CD4-positive, alpha-beta T cell (primary cell): ENCODE measurements at regions of chr9 and their contacts with region 1.

Region 1: GRCh38 chr9:30329431-30329830 is 2055.0 kb upstream of the ACO1 start:
- DNase-seq: no peak
- ATAC-seq: no peak
- H3K4me3 ChIP-seq: no peak overlapping the region
- H3K4me3 Mint-ChIP-seq: no peak overlapping the region
- H3K27ac ChIP-seq: no peak overlapping the region
- H3K27ac Mint-ChIP-seq: no peak overlapping the region
- H3K4me1 ChIP-seq: no peaks in the 10 kb centered on the region
- H3K4me1 Mint-ChIP-seq: no peaks in the 10 kb centered on the region
- H3K27me3 ChIP-seq: no peaks in the 10 kb centered on the region
- H3K27me3 Mint-ChIP-seq: no peaks in the 10 kb centered on the region
- CTCF ChIP-seq: no peak

Region 2: DNA sequence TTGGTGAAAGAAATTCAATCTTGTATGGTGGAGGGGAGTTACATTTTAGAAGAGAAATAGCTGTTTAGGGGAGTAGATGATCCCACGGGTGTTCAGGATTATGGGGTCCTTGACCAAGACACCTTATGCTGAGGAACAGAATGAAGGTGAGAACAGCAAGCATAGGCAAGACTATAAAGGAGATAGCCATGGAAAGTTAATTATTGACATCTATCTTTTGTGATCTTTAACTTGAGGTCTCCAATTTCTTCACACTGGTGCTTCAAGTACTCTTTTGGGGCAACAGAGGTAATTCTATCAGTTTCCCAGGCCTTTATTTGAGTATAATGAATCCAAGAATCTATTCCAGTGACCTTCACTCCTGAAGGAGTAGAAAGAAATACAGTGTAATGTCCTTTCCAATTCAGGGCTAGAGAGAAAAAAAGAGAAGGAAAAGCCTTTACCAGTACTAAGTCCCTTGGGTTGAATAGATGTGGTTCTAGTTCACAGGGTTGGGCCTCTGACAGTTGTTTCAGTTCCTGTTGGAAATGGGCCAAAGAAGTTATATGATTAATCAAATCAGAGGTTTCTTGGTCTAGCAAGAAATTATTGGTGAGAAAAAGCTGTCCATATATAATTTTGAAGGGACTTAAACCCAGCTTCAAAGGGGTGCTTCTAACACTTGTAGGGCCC is 49.1 kb before region 1 on chr9:
- CTCF ChIA-PET with region 1: no interaction called
- POLR2A ChIA-PET with region 1: no interaction called
- intact Hi-C with region 1: loop called in 1 of 2 experiments (anchors 10 kb)
- DNase-seq: no peak
- ATAC-seq: no peak
- H3K4me3 ChIP-seq: no peak overlapping the region
- H3K4me3 Mint-ChIP-seq: no peak overlapping the region
- H3K27ac ChIP-seq: no peak overlapping the region
- H3K27ac Mint-ChIP-seq: no peak overlapping the region
- H3K4me1 ChIP-seq: no peaks in the 10 kb centered on the region
- H3K4me1 Mint-ChIP-seq: no peaks in the 10 kb centered on the region
- H3K27me3 ChIP-seq: no peaks in the 10 kb centered on the region
- H3K27me3 Mint-ChIP-seq: no peaks in the 10 kb centered on the region
- CTCF ChIP-seq: no peak

Region 3: DNA sequence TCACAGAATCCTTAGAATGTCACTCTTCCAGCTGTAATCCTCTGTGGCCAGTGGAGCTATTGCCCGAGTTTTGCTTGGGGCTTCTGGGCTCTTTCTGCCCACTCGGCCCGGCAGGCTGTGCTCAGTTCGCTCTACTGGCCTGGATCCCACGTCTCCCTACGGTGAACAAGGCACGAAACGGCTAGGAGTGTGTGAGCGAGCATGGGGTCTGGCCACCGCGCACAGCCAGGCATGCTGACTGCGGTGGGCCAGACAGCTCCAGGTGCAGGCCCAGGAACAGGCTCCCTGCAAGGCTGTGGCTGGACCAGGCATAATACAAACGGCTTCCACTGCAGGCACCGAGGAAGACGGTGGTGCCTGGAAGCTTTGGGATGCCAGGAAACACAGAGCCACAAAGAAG is 19.5 kb after region 1 on chr9:
- CTCF ChIA-PET with region 1: no interaction called
- POLR2A ChIA-PET with region 1: no interaction called
- intact Hi-C with region 1: no loop called
- DNase-seq: no peak
- ATAC-seq: no peak
- H3K4me3 ChIP-seq: no peak overlapping the region
- H3K4me3 Mint-ChIP-seq: no peak overlapping the region
- H3K27ac ChIP-seq: no peak overlapping the region
- H3K27ac Mint-ChIP-seq: no peak overlapping the region
- H3K4me1 ChIP-seq: no peaks in the 10 kb centered on the region
- H3K4me1 Mint-ChIP-seq: no peaks in the 10 kb centered on the region
- H3K27me3 ChIP-seq: no peaks in the 10 kb centered on the region
- H3K27me3 Mint-ChIP-seq: no peaks in the 10 kb centered on the region
- CTCF ChIP-seq: no peak